SK-N-SH (cell line): ENCODE measurements at regions of chr9 and their contacts with region 1.

Region 1: GRCh38 chr9:134449221-134449894 is 123.1 kb downstream of the RXRA start:
- DNase-seq: peak; percentile 97
- H3K4me3 ChIP-seq: no peak overlapping the region; a peak in 1 of 4 replicates
- H3K27ac ChIP-seq: peak overlapping the region; percentile 36 to 48; a peak in 2 of 4 replicates
- H3K4me1 ChIP-seq: peaks cover 4 to 13% of the 10 kb centered on the region in 2 experiments; a peak in 2 of 4 replicates
- H3K27me3 ChIP-seq: no peaks in the 10 kb centered on the region
- CTCF ChIP-seq: peak; percentile 90
- EP300 ChIP-seq: no peak
- RAD21 ChIP-seq: peak; percentile 100

Region 2: DNA sequence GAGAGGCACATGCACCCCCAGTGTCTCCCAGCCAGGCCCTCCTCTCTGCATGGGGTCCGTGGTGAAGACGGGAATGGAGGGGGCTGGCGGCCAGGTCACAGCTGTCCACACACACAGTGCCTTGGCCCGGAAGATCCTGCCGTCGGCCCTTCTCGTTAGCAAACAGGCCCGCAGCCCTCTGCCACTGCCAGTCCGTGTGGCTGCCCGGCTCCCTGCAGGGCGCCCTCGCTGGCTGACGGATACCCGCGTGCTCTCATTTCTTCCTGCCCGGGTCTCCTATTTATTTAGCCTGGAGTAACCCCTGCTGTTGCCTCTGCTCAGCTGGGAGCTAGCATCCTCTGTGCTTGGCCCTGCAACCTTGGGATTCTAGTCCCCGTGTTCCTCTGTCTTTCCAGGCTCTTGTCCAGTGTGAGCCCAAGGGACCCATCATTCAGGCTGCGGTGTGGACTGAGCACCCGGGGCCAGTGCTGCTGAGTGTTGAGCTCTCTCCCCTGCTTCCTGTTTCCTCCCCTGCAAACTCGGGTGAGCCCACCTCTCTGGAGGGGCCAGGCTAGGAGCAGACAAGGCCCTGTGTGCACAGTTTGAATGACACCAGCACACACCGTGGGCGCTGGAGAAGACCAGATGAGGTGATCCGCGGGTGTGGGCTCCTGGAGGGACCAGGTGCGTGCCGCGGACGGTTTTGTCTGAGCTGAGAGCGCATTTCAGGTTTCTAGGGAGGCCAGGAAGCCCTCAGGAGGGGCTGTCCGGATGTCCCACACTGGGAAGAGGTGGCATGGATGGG is 270.4 kb before region 1 on chr9:
- CTCF ChIA-PET with region 1: interaction called, 384 read pairs
- POLR2A ChIA-PET with region 1: no interaction called
- DNase-seq: peak; percentile 54
- H3K4me3 ChIP-seq: no peak overlapping the region
- H3K27ac ChIP-seq: no peak overlapping the region
- H3K4me1 ChIP-seq: peaks cover 0 to 7% of the 10 kb centered on the region in 2 experiments; a peak in 1 of 4 replicates
- H3K27me3 ChIP-seq: peaks cover 7% of the 10 kb centered on the region; the same call in 1 of the 2 replicates
- CTCF ChIP-seq: no peak
- EP300 ChIP-seq: no peak
- RAD21 ChIP-seq: no peak

Region 3: DNA sequence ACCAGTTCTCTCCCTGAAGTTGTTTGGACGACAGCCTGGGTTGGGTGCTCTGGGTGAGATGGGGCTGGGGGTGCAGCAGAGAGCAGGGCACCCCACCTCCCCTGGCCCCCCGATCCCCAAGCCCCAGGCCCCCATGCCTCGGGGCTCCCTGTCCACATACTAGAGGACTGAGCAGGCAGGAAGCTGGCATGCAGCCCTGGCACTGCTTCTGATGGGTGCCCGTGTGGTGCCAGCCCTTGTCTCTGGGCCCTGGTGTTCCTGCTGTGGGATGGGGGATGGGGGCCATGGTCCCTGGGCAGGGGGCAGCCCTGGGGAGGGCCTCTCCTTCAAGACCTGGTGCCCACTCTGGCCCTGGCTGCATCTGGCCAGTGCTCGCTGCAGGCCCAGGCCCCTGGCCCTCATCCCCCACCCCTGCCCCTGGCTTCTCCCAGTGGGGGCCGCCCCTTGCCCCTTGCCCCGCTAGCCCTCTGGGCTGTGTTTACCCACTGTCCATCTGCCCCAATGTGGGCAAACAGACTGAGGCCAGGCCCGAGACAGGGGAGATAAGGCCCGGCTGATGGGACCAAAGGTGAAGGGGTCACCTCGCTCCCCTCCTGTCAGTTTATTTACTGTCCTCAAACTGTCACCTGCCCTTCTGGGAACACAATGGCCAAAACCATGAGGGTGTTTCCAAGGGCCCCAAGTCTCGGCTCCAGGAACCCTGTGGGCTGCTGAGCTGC is 190.4 kb before region 1 on chr9:
- CTCF ChIA-PET with region 1: no interaction called
- POLR2A ChIA-PET with region 1: no interaction called
- DNase-seq: no peak
- H3K4me3 ChIP-seq: no peak overlapping the region
- H3K27ac ChIP-seq: no peak overlapping the region
- H3K4me1 ChIP-seq: peaks cover 0 to 3% of the 10 kb centered on the region in 2 experiments; a peak in 1 of 4 replicates
- H3K27me3 ChIP-seq: no peaks in the 10 kb centered on the region
- CTCF ChIP-seq: no peak
- EP300 ChIP-seq: no peak
- RAD21 ChIP-seq: no peak

Region 4: GRCh38 chr9:134544388-134545214 is 95.2 kb after region 1 on chr9:
- CTCF ChIA-PET with region 1: no interaction called
- POLR2A ChIA-PET with region 1: no interaction called
- DNase-seq: no peak
- H3K4me3 ChIP-seq: no peak overlapping the region
- H3K27ac ChIP-seq: peak overlapping the region in 1 of 2 experiments; percentile 38; a peak in 1 of 4 replicates
- H3K4me1 ChIP-seq: peaks cover 0 to 13% of the 10 kb centered on the region in 2 experiments; a peak in 1 of 4 replicates
- H3K27me3 ChIP-seq: no peaks in the 10 kb centered on the region
- CTCF ChIP-seq: peak; percentile 11; the same call in 1 of the 2 replicates
- EP300 ChIP-seq: no peak; a peak in 1 of 4 replicates
- RAD21 ChIP-seq: no peak

Region 5: DNA sequence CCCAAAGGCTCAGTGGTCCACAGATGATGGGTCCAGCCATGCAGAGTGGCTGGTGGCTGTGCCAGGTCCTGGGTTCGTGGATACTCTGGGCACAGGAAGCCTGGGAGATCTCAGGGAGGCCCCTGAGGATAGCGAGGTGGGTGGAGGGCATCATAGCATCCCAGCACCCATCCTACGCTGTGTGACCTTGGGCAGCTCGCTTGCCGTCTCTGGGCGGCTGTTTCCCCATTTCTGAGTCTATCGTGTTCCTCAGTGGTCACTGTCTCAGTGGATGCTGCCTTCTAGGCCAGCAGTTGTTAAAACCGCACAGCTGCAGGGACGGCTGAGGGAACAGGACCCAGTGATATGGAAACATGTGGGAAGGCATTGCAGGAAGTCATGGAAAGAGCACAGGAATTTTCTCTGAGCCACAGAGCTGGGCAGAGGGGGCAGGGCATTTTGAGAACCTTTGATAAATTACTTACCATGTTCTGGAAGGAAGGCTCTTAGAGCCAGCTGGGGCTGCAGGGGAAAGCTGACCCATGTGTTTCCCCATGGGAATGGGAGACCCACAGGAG is 105.8 kb after region 1 on chr9:
- CTCF ChIA-PET with region 1: interaction called, 11 read pairs
- POLR2A ChIA-PET with region 1: no interaction called
- DNase-seq: no peak
- H3K4me3 ChIP-seq: no peak overlapping the region
- H3K27ac ChIP-seq: peak overlapping the region in 1 of 2 experiments; percentile 39; a peak in 2 of 4 replicates
- H3K4me1 ChIP-seq: peaks cover 36 to 39% of the 10 kb centered on the region in 2 experiments; a peak in 3 of 4 replicates
- H3K27me3 ChIP-seq: no peaks in the 10 kb centered on the region
- CTCF ChIP-seq: no peak
- EP300 ChIP-seq: no peak
- RAD21 ChIP-seq: no peak

Region 6: DNA sequence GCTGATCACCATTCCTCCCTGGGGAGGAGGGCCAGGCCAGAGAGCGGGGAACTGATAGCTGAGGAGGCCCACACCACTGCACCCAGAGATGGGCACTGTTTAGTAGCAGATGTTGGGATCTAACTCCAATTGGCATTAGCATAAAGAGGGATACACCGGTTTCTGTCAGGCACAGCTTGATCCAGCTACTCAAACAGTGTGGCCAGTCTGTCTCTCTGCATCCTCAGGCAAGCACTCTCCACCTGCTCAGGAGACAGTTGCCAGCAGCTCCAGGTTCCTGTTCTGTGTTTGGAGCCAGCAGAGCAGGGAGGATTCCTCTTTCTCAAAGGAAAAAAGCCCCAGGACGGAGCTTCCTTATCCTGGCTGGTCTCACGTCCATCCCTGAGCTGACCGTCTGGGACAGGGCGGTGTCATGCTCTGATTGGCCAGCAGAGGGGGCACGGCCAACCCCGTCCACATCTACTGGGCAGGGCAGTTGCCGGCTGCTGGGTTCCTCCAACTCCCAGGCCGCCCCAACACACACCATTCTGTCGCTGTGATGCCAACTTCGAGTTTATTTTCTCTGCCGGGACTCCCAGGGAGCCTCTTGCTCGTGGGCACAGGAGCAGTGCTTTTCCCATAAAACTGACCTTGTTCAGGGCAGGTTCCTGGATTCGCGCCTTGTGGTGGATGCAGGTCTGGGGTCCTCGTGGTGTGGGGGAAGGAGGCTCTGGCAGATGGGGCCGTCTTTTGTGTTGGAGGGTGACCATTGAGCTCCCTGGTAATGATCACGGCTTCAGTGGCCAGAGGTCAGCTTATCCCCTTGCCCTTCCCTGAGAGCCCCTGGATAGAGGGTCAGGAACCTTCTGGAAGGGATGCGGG is 240.2 kb after region 1 on chr9:
- CTCF ChIA-PET with region 1: interaction called, 79 read pairs
- POLR2A ChIA-PET with region 1: no interaction called
- DNase-seq: peak; percentile 88
- H3K4me3 ChIP-seq: no peak overlapping the region; a peak in 1 of 4 replicates
- H3K27ac ChIP-seq: 0 out of 4 replicates have a peak overlapping the region, but pooled peaks of 1 of the 2 experiments have one; percentile 5
- H3K4me1 ChIP-seq: peaks cover 0 to 36% of the 10 kb centered on the region in 2 experiments; a peak in 1 of 4 replicates
- H3K27me3 ChIP-seq: no peaks in the 10 kb centered on the region
- CTCF ChIP-seq: peak; percentile 75
- EP300 ChIP-seq: no peak
- RAD21 ChIP-seq: peak; percentile 55

Region 7: DNA sequence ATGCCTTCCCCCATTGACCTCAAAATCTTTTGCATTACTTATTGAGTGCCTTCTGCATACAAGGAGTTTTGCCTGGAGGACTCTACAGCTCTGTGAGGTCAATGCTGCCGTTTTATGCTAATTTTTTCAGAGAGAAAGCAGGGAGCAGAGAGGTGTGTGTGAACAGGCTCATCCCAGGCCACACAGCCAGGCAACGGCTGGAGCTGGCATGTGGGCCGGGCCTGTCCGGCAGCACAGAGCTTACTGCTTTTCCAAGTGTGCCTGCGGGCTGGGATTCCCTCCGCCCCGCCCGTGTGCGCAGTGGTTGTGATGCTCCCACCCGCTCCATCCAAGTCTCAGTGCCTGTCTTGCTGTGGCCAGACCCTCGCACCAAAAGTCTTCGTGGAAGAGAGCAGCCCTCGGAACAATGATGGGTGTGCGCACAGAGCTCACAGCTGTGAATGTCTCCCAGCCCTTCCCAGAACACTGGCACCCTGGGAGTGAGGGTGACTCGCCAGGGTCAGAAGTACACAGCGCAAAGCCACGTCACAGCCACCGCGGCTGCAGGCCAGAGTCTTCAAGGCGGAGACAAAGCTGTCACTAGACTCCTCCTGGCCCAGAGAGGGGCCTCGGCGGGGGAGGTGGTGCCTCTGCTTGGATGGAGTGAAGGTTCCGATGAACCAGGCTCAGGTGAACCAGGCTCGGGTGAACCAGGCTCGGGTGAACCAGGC is 275.0 kb after region 1 on chr9:
- CTCF ChIA-PET with region 1: interaction called, 12 read pairs
- POLR2A ChIA-PET with region 1: no interaction called
- DNase-seq: no peak
- H3K4me3 ChIP-seq: no peak overlapping the region
- H3K27ac ChIP-seq: no peak overlapping the region
- H3K4me1 ChIP-seq: no peaks in the 10 kb centered on the region
- H3K27me3 ChIP-seq: no peaks in the 10 kb centered on the region
- CTCF ChIP-seq: no peak
- EP300 ChIP-seq: no peak
- RAD21 ChIP-seq: no peak

Region 8: GRCh38 chr9:134793288-134794188 is 344.2 kb after region 1 on chr9:
- CTCF ChIA-PET with region 1: no interaction called
- POLR2A ChIA-PET with region 1: no interaction called
- DNase-seq: no peak
- H3K4me3 ChIP-seq: no peak overlapping the region
- H3K27ac ChIP-seq: no peak overlapping the region
- H3K4me1 ChIP-seq: no peaks in the 10 kb centered on the region
- H3K27me3 ChIP-seq: no peaks in the 10 kb centered on the region
- CTCF ChIP-seq: no peak
- EP300 ChIP-seq: no peak
- RAD21 ChIP-seq: no peak

Region 9: DNA sequence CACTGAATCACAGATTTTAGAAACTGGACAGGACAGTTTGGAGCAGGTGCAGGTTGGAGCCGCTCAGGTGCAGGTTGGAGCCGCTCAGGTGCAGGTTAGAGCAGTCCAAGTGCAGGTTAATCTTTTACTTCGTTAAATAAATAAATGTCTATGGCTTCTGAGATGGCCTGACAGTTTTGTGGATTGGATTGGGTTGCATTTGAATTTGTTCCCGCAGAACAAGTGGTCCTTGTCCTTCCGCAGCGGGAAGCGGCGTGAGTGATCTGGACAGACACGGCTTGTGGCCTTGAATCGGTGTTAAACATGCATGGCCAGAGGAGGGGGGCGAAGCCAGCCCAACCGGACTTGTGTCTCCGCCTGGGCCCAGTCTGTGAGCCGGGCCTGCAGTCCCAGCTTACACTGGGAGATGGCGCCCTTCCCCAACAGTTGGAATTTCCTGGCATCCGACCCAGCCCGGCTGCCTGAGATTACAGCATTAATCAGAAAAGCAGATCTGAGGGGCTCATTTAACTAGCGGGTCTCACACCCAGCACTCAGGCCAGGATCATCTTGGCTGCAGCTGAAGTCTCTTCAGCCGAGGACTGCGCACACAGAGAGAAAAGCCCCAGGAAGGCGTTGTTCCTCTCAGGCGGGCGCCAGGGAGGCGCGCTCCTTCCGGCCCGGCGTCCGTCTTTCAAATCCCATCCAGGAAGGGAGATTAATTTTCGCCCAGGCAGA is 636.6 kb after region 1 on chr9:
- CTCF ChIA-PET with region 1: interaction called, 11 read pairs
- POLR2A ChIA-PET with region 1: no interaction called
- DNase-seq: peak; percentile 92
- H3K4me3 ChIP-seq: peak overlapping the region; percentile 17 to 48; a peak in 3 of 4 replicates
- H3K27ac ChIP-seq: no peak overlapping the region
- H3K4me1 ChIP-seq: peaks cover 0 to 10% of the 10 kb centered on the region in 2 experiments; a peak in 1 of 4 replicates
- H3K27me3 ChIP-seq: no peaks in the 10 kb centered on the region
- CTCF ChIP-seq: peak; percentile 91
- EP300 ChIP-seq: no peak
- RAD21 ChIP-seq: peak; percentile 98